ENCODE measurements at regions of chr19 and their contacts with region 1.

Region 1: GRCh38 chr19:11987405-11988281 is 22.8 kb downstream of the ZNF763 start:
- DNase-seq: peak; percentile 85
- H3K4me3 ChIP-seq: peak overlapping the region; percentile 91 to 100 (median 93)
- H3K27ac ChIP-seq: peak overlapping the region; percentile 40
- H3K4me1 ChIP-seq: peaks cover 9% of the 10 kb centered on the region
- H3K27me3 ChIP-seq: no peaks in the 10 kb centered on the region
- CTCF ChIP-seq: no peak
- POLR2A ChIP-seq: peak; percentile 85

Region 2: GRCh38 chr19:11597202-11598102 is 390.2 kb before region 1 on chr19 and contains the start of gene ZNF627:
- CTCF ChIA-PET with region 1: no interaction called
- POLR2A ChIA-PET with region 1: no interaction called
- dilution Hi-C with region 1: no loop called
- intact Hi-C with region 1: loop called (anchors 10 kb)
- DNase-seq: peak; percentile 97
- H3K4me3 ChIP-seq: peak within 1 kb of the TSS; percentile 94 to 97 (median 95)
- H3K27ac ChIP-seq: peak within 1 kb of the TSS; percentile 84
- H3K4me1 ChIP-seq: peaks cover 8% of the 10 kb centered on the region
- H3K27me3 ChIP-seq: no peaks in the 10 kb centered on the region
- CTCF ChIP-seq: no peak
- POLR2A ChIP-seq: peak; percentile 95
- total RNA-seq, gene ZNF627: 9.7 and 11.2 TPM in 2 replicates

Region 3: GRCh38 chr19:11699931-11700794 is 287.5 kb before region 1 on chr19:
- CTCF ChIA-PET with region 1: interaction called, 13 read pairs
- POLR2A ChIA-PET with region 1: no interaction called
- dilution Hi-C with region 1: no loop called
- intact Hi-C with region 1: no loop called
- DNase-seq: peak; percentile 34
- H3K4me3 ChIP-seq: no peak overlapping the region
- H3K27ac ChIP-seq: no peak overlapping the region
- H3K4me1 ChIP-seq: peaks cover under 1% of the 10 kb centered on the region
- H3K27me3 ChIP-seq: no peaks in the 10 kb centered on the region
- CTCF ChIP-seq: peak; percentile 47 to 58
- POLR2A ChIP-seq: no peak

Region 4: DNA sequence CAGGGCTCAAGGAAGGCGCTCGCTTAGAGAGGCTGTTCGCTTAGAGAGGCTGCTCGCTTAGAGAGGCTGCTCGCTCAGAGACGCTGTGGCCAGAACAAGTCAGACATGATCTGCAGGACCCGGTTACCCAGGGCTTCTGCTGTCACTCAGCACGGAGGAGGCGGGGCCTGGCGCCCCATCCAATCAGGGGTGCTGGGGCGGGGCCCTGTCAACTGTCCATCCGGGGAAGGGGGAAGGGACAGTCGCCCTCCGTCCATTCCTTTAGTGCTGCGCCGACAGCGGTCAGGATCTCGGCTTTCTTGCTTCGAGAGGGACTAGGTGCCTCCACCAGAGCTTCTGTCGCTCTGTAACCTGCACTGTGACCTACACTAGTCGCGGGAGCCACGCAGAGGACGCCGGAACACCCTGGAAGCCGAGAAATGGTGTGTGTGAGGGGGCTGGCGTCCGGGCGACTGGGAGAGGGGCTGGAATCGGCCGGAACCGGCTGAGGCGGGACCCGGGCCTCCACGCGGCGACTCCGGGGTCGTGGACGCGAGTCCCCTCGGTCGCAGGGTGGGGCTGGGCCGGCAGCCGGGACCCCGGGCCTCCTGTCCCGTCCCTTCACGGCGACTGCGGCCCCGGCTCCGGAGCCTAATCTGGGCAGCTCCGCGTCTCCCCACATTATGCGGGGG is 173.5 kb before region 1 on chr19 and contains the start of gene ZNF440:
- CTCF ChIA-PET with region 1: no interaction called
- POLR2A ChIA-PET with region 1: no interaction called
- dilution Hi-C with region 1: no loop called
- intact Hi-C with region 1: loop called (anchors 5 kb)
- DNase-seq: peak; percentile 95
- H3K4me3 ChIP-seq: peak within 1 kb of the TSS; percentile 61 to 70 (median 69)
- H3K27ac ChIP-seq: no peak within 1 kb of the TSS
- H3K4me1 ChIP-seq: peaks cover 6% of the 10 kb centered on the region
- H3K27me3 ChIP-seq: no peaks in the 10 kb centered on the region
- CTCF ChIP-seq: no peak
- POLR2A ChIP-seq: peak; percentile 95
- total RNA-seq, gene ZNF440: 9.1 and 13.3 TPM in 2 replicates

Region 5: DNA sequence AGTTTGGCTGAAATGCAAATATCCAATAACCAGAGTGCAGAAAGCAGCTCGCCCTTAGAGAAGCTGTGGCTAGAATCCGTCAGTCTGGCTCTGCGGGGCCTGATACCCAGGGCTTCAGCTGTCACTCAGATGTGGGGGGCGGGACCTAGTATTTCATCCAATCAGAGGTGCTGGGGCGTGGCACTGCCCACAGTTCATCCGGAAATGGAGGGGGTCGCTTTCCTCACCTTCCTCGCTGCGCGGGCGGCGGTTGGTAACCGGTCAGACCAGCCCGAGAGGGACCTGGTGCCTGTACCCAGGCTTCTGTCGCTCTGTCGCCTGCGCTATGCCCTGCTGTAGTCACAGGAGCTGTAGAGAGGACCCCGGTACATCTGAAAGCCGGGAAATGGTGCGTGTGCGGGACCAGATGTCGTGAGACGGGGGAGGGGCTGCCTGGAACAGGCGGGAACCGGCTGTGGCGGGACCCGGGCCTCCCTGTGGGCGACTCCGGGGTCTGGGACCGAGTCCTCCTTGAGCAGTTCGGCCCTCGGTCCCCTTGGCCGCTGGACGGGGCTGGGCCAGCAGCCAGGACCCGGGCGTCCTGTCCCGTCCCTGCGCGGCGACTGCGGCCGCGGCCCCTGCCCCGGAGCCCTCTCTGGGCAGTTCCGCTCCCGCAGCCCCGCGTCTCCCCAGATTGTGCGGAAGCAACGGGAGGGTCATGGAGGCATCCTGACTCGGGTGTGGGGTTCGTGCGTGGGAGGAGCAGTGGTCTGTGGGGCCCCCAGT is 62.6 kb before region 1 on chr19 and contains the start of gene ZNF700:
- CTCF ChIA-PET with region 1: interaction called, 162 read pairs
- POLR2A ChIA-PET with region 1: interaction called, 5 read pairs
- dilution Hi-C with region 1: no loop called
- intact Hi-C with region 1: loop called (anchors 1 kb)
- DNase-seq: peak; percentile 91
- H3K4me3 ChIP-seq: peak within 1 kb of the TSS; percentile 59 to 90 (median 81)
- H3K27ac ChIP-seq: peak within 1 kb of the TSS; percentile 64
- H3K4me1 ChIP-seq: peaks cover 15% of the 10 kb centered on the region
- H3K27me3 ChIP-seq: no peaks in the 10 kb centered on the region
- CTCF ChIP-seq: no peak
- POLR2A ChIP-seq: peak; percentile 87
- total RNA-seq, gene ZNF700: 6.9 and 7.9 TPM in 2 replicates

Region 6: GRCh38 chr19:12139885-12140547 is 152.4 kb after region 1 on chr19 and contains the start of gene ZNF20:
- CTCF ChIA-PET with region 1: interaction called, 8 read pairs
- POLR2A ChIA-PET with region 1: no interaction called
- dilution Hi-C with region 1: no loop called
- intact Hi-C with region 1: loop called (anchors 2 kb)
- DNase-seq: peak; percentile 90
- H3K4me3 ChIP-seq: peak within 1 kb of the TSS; percentile 63 to 72 (median 68)
- H3K27ac ChIP-seq: peak within 1 kb of the TSS; percentile 30
- H3K4me1 ChIP-seq: no peaks in the 10 kb centered on the region
- H3K27me3 ChIP-seq: no peaks in the 10 kb centered on the region
- CTCF ChIP-seq: no peak
- POLR2A ChIP-seq: no peak
- total RNA-seq, gene ZNF20: 0.35 and 0.88 TPM in 2 replicates

Region 7: DNA sequence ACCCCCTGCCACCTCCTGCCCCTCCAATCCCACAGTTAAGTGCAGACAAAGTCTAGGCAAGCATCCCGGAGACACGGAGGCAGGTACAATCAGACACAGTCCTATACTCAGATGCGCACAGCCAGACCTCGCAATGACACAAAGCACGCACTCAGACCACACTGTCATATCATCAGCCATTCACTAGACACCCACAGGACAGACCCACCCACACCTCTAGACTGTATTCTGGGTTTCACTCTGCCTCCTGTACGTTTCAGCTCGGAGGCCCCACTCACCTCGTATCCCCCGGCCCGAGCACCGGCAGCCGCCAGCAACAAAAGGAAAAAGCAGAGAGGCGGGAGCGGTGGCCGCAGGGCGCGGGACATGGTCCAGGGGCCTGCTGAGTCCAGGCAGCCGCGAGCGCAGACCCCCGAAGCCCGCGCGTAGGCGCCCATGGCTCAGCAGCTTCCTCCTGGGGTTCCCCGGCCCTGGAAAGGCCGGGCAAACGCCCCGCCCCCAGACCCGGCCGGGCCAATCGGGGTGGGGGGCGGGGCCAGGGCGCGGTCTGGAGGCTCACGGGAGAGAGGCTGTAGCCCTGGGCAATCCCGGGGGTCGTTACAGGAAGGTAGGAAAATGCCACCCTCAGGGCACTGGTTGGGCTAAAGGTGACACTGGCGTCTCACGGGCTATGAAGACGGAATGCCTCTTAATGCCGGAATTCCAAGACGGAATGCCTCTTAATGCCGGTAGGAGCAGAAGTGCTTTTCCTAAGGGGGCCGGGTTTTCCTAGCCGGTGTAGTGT is 678.8 kb after region 1 on chr19 and contains the starts of genes MAN2B1 and WDR83:
- CTCF ChIA-PET with region 1: no interaction called
- POLR2A ChIA-PET with region 1: no interaction called
- dilution Hi-C with region 1: no loop called
- intact Hi-C with region 1: loop called (anchors 5 kb)
- DNase-seq: peak; percentile 82
- H3K4me3 ChIP-seq: peak within 1 kb of the TSS; percentile 60 to 73 (median 67)
- H3K27ac ChIP-seq: peak within 1 kb of the TSS; percentile 38
- H3K4me1 ChIP-seq: peaks cover 20% of the 10 kb centered on the region
- H3K27me3 ChIP-seq: no peaks in the 10 kb centered on the region
- CTCF ChIP-seq: no peak
- POLR2A ChIP-seq: peak; percentile 49
- total RNA-seq, gene MAN2B1: 73.0 and 76.8 TPM in 2 replicates
- total RNA-seq, gene WDR83: 10.9 and 11.8 TPM in 2 replicates